ENCODE measurements at regions of chr13 and their contacts with region 1.

Region 1: DNA sequence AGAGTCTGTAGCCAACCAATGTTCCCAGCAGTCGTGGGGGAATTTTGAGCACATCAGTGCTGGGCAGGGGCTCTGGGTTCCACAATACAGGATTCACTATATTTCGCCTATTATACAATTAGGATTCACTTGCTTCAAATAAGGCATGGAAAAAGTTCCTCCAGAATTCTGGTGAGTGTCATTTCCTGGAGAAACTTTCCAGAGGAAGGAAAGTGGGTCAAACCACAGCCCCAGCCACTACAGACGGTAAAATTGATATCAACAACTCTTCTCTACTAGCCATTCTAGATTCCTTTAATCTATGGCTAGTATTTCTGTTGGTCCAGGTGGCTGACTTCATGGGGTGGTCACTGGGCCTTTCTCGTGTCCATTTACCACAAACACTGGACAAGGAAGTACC is 10.5 kb downstream of the MYCBP2 start:
- DNase-seq: no peak
- CTCF ChIP-seq: no peak

Region 2: GRCh38 chr13:77239312-77239711 is 77.1 kb before region 1 on chr13:
- CTCF ChIA-PET with region 1: no interaction called
- POLR2A ChIA-PET with region 1: no interaction called
- DNase-seq: no peak
- CTCF ChIP-seq: no peak

Region 3: DNA sequence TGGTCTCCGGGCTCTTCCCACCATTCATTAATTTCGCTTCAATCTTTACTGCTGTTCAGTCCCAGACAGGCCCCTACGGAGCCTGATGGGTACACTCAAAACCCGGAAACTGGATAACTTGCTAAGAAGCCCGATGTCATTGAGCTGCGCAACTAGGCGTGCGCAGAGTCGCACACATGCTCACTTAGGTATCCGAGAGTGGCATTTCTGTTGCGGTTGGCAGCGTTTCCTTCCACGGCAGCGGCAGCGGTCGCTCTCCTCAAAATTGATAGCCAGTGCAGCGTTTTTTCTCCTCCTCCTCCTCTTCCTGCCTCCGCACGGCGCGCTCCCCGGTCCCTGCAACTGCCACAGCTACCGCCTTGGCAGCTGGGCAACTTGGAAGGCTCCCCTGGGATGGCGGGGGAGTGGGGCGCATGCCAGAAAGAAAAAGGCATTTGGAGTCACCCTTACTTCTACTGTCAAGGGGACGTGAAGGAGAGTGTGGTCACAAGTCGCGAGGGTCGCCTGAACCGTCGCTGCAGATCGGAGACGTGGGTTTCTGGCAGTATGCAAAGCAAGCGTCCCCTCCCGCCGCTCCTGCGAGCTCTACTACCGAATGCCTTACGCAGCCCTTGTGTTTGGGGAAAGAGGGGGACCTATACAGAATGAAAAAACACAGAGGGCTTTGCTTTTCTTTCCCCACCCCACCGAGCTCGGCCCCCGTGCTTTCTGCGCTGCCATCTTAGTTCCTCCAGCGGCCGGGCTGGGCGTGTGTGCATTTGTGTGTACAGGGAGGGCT is 12.9 kb after region 1 on chr13:
- CTCF ChIA-PET with region 1: interaction called, 22 read pairs
- POLR2A ChIA-PET with region 1: no interaction called
- DNase-seq: peak; percentile 82
- CTCF ChIP-seq: no peak

Measured in GM10248 (cell line).